Breast epithelium (tissue), 4 donors: ENCODE measurements at regions of chr4 and their contacts with region 1.

Region 1: GRCh38 chr4:131609039-131609438 is 1540.1 kb upstream of the PCDH10 start:
- DNase-seq: no peak
- H3K4me3 ChIP-seq: no peak overlapping the region
- H3K27ac ChIP-seq: no peak overlapping the region
- H3K4me1 ChIP-seq: no peaks in the 10 kb centered on the region
- H3K27me3 ChIP-seq: no peaks in the 10 kb centered on the region
- CTCF ChIP-seq: no peak
- POLR2A ChIP-seq: no peak

Region 2: GRCh38 chr4:130850019-130850524 is 759.0 kb before region 1 on chr4:
- intact Hi-C with region 1: no loop called
- DNase-seq: no peak
- H3K4me3 ChIP-seq: peak overlapping the region in 1 of 3 donors; percentile 1
- H3K27ac ChIP-seq: no peak overlapping the region
- H3K4me1 ChIP-seq: no peaks in the 10 kb centered on the region
- H3K27me3 ChIP-seq: no peaks in the 10 kb centered on the region
- CTCF ChIP-seq: no peak
- POLR2A ChIP-seq: no peak

Region 3: GRCh38 chr4:131650951-131651350 is 41.9 kb after region 1 on chr4:
- intact Hi-C with region 1: loop called (anchors 2 kb)
- DNase-seq: no peak
- H3K4me3 ChIP-seq: no peak overlapping the region
- H3K27ac ChIP-seq: no peak overlapping the region
- H3K4me1 ChIP-seq: no peaks in the 10 kb centered on the region
- H3K27me3 ChIP-seq: no peaks in the 10 kb centered on the region
- CTCF ChIP-seq: no peak
- POLR2A ChIP-seq: no peak

Region 4: DNA sequence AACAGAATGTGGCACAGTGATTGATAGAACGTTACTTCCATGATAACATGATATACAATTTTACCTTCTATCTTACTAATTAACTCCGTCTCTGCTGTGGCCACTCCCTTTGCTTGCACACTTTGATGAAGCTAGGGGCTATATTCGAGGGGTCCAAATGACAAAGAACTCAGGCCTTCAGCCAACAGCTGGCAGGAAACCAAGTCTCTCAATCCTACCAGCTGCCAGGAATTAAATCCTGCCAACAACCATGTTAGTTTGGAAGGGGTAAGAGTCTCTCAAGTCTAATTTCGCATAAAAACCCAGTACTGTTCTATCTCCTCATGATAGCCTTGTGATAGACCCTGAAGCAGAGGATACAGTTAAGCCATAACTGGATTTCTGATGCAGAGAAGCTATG is 417.1 kb after region 1 on chr4:
- intact Hi-C with region 1: no loop called
- DNase-seq: no peak
- H3K4me3 ChIP-seq: no peak overlapping the region
- H3K27ac ChIP-seq: no peak overlapping the region
- H3K4me1 ChIP-seq: no peaks in the 10 kb centered on the region
- H3K27me3 ChIP-seq: no peaks in the 10 kb centered on the region
- CTCF ChIP-seq: no peak
- POLR2A ChIP-seq: no peak